ENCODE measurements at regions of chr5 and their contacts with region 1.

Region 1: GRCh38 chr5:168802337-168802736 is 223.2 kb upstream of the PANK3 start:
- DNase-seq: peak; percentile 30
- H3K4me3 Mint-ChIP-seq: peak overlapping the region; percentile 71
- H3K27ac Mint-ChIP-seq: peak overlapping the region; percentile 94
- H3K4me1 Mint-ChIP-seq: peaks cover 48% of the 10 kb centered on the region
- H3K27me3 Mint-ChIP-seq: no peaks in the 10 kb centered on the region

Region 2: DNA sequence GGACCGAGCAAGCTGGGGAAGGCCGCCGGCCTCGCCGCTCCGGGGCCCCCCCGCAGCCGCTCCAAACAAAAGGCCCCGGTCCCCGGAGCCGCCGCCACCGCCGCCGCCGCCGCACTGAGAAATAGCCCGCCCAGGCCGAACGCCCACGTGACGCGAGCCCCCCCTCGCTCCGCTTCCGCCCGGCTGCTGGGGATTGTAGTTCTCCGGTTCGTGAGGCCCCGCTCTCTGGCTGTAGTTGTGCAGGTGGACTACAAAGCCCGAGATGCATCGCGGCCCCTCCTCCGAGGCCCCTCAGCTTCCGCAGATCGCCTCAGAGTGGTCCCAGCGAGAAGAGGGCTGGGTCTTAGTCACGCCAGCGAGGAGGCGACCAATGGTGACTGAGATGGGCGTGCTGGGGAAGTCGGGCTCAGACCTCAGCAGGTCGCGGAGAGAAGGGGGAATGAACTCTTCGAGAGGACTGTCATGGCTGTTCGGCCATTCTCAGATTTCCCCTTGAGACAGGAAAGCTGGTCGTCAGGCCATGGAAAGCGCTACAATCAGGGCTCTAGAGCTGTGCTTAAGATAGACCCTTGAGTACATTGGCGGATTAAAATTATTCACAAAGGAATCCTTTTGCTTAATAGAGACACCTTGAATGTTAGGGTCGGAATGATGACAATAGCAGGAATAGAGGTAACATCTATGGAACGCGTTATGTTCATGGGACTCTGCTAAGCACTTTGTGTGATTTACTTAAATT is 222.7 kb before region 1 on chr5:
- intact Hi-C with region 1: loop called (anchors 5 kb)
- DNase-seq: peak; percentile 97
- H3K4me3 Mint-ChIP-seq: peak overlapping the region; percentile 77
- H3K27ac Mint-ChIP-seq: peak overlapping the region; percentile 94
- H3K4me1 Mint-ChIP-seq: peaks cover 32% of the 10 kb centered on the region
- H3K27me3 Mint-ChIP-seq: no peaks in the 10 kb centered on the region

Region 3: GRCh38 chr5:168679515-168679920 is 122.8 kb before region 1 on chr5:
- intact Hi-C with region 1: loop called (anchors 10 kb)
- DNase-seq: peak; percentile 42
- H3K4me3 Mint-ChIP-seq: no peak overlapping the region
- H3K27ac Mint-ChIP-seq: no peak overlapping the region
- H3K4me1 Mint-ChIP-seq: peaks cover 21% of the 10 kb centered on the region
- H3K27me3 Mint-ChIP-seq: no peaks in the 10 kb centered on the region

Region 4: DNA sequence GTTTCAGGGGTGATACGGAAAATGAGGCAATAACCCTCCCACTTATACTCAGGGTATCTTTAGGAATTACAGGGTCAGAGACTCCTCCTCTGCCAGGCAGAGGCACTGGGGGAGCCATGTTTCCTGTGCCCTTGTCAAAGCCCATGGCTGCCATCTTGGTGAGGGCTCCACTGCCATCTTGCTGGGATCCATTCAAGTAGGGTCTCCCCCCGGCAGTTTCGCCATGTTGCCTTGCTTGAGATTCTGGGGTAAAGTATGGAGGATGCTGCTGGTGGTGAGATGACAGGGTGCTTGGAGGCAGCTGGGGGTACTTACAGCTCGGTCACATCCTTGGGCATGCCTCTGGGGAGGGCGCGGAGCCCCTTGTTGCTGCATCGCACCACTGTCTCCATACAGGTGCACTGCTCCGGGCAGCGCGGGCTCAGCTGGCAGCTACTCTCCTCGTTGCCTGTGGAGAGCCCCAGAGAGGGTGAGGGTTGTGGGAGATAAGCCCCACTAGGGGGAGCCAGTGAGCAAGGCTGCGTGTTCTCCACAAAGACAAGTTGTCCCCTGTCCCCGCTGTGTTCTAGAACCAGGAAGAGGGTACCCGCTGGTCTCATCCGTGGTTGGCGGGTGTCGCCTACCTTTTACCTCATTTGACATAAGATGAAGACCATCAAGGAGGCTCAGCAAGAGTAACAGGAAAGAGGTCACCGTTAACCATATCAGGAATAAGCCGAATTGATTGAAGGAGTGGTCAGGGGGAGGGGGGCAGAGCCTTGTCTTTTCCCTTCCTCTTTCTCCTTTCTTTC is 54.2 kb before region 1 on chr5:
- intact Hi-C with region 1: loop called (anchors 5 kb)
- DNase-seq: peak; percentile 51
- H3K4me3 Mint-ChIP-seq: no peak overlapping the region
- H3K27ac Mint-ChIP-seq: peak overlapping the region; percentile 76
- H3K4me1 Mint-ChIP-seq: peaks cover 13% of the 10 kb centered on the region
- H3K27me3 Mint-ChIP-seq: no peaks in the 10 kb centered on the region

Region 5: GRCh38 chr5:168822745-168823281 is 20.5 kb after region 1 on chr5:
- intact Hi-C with region 1: loop called (anchors 1 kb)
- DNase-seq: no peak
- H3K4me3 Mint-ChIP-seq: peak overlapping the region; percentile 65
- H3K27ac Mint-ChIP-seq: peak overlapping the region; percentile 94
- H3K4me1 Mint-ChIP-seq: peaks cover 33% of the 10 kb centered on the region
- H3K27me3 Mint-ChIP-seq: no peaks in the 10 kb centered on the region

Region 6: DNA sequence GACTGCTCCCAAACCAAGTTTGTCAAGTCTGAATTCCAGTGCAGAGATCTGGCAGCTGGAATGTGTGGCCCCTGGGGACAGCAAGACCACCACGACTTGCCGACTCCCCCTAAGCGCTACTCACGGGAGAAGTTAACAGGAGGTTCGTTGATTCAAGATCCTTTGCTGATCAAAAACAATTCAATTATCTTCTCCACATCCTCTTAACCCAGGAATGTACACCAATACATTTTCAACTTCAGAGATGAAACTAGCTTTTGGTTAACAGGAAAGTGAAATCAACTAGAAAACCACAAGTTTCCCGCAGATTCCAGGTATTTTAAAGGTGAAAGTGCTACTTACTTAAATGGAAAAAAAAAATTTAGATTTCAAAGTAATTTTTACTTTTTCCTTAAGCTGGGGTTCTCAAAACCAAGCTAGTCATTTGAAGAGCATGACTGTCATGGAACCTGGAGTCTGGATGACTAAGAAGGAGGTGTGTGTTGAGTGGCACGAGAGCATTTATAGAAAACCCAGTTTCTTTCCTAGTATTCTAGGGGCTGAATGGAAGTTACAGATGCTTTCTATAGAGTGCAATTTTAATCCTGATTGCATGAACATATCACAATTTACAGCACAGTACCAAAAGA is 34.4 kb after region 1 on chr5:
- intact Hi-C with region 1: loop called (anchors 1 kb)
- DNase-seq: no peak
- H3K4me3 Mint-ChIP-seq: peak overlapping the region; percentile 81
- H3K27ac Mint-ChIP-seq: peak overlapping the region; percentile 94
- H3K4me1 Mint-ChIP-seq: peaks cover 53% of the 10 kb centered on the region
- H3K27me3 Mint-ChIP-seq: no peaks in the 10 kb centered on the region

Measured in activated T-helper 2 cell treated with anti-CD3 and anti-CD28 coated beads, Interferon-gamma antibody, Interleukin-2, Interleukin-4, amounts not matched to agents 10 μg/mL and 5 μg/mL and 100 μg/mL, durations not matched to agents 14 hours and 24 hours and 36 hours (primary cell).